ENCODE measurements at regions of chr3 and their contacts with region 1.

Region 1: GRCh38 chr3:143001369-143002082 is at the start of gene U2SURP:
- DNase-seq: peak; percentile 98
- H3K4me3 ChIP-seq: peak within 1 kb of the TSS; percentile 85
- H3K27ac ChIP-seq: peak within 1 kb of the TSS; percentile 95
- H3K4me1 ChIP-seq: peaks cover 6% of the 10 kb centered on the region
- H3K27me3 ChIP-seq: no peaks in the 10 kb centered on the region
- CTCF ChIP-seq: no peak
- total RNA-seq, gene U2SURP: 164 and 165 TPM in 2 replicates

Region 2: GRCh38 chr3:142498397-142499180 is 502.9 kb before region 1 on chr3:
- CTCF ChIA-PET with region 1: no interaction called
- POLR2A ChIA-PET with region 1: interaction called, 17 read pairs
- intact Hi-C with region 1: no loop called
- DNase-seq: no peak
- H3K4me3 ChIP-seq: no peak overlapping the region
- H3K27ac ChIP-seq: no peak overlapping the region
- H3K4me1 ChIP-seq: no peaks in the 10 kb centered on the region
- H3K27me3 ChIP-seq: no peaks in the 10 kb centered on the region
- CTCF ChIP-seq: no peak

Region 3: DNA sequence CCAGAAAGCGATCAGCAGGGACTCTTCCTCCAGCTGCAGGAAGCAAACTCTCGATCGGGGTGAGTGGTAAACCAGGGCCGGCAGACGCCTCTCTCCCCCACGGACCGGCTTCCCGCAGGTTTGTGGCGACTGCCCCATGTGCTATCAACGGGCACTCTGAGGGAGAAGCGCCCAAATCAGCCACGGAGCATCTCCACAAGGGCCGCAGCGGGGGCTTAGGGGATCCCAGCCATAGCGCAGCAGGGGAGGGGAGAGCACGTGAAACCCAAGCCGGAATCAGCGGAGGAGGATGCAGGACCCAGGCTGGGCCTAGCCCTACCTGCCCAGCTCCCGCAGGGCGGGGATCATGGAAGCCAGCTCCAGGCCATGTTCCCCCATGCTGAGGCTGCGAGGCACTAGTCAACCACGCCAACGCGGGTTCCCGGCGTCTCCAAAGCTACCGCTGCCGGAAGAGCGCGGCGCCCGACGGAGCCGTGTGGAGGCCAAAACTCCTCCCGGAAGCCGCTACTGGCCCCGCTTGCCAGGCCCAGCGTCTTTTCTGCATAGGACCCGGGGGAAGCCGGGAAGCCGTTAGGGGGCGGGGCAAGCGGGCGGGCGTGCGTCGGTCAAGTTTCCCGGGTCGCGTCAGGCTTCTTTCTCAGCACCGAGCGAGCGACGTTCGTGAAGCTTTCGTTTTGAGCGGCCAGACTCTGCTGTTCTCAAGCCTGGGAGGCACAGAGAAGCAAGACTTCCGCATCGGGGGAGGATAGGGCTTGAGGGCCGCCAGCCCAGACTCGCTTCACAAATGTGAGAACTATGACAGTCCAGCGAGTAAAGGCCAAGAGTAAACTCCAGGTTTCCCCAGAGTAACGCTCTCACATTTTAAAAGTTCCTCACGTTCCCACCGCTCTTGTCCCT is 423.0 kb before region 1 on chr3 and contains the start of gene ATR:
- CTCF ChIA-PET with region 1: no interaction called
- POLR2A ChIA-PET with region 1: interaction called, 18 read pairs
- intact Hi-C with region 1: loop called (anchors 5 kb)
- DNase-seq: peak; percentile 98
- H3K4me3 ChIP-seq: peak within 1 kb of the TSS; percentile 93
- H3K27ac ChIP-seq: peak within 1 kb of the TSS; percentile 84
- H3K4me1 ChIP-seq: no peaks in the 10 kb centered on the region
- H3K27me3 ChIP-seq: no peaks in the 10 kb centered on the region
- CTCF ChIP-seq: no peak
- total RNA-seq, gene ATR: 27.5 and 28.3 TPM in 2 replicates

Region 4: GRCh38 chr3:142795332-142795731 is 206.2 kb before region 1 on chr3:
- CTCF ChIA-PET with region 1: no interaction called
- POLR2A ChIA-PET with region 1: interaction called, 24 read pairs
- intact Hi-C with region 1: no loop called
- DNase-seq: no peak
- H3K4me3 ChIP-seq: no peak overlapping the region
- H3K27ac ChIP-seq: no peak overlapping the region
- H3K4me1 ChIP-seq: no peaks in the 10 kb centered on the region
- H3K27me3 ChIP-seq: no peaks in the 10 kb centered on the region
- CTCF ChIP-seq: no peak

Measured in A673 (cell line).